Activated T-helper 2 cell treated with anti-CD3 and anti-CD28 coated beads, Interferon-gamma antibody, Interleukin-2, Interleukin-4, amounts not matched to agents 10 μg/mL and 5 μg/mL and 100 μg/mL, durations not matched to agents 14 hours and 24 hours and 36 hours (primary cell): ENCODE measurements at regions of chr14 and their contacts with region 1.

Region 1: GRCh38 chr14:60945984-60946383 is 34.9 kb downstream of the TRMT5 start:
- DNase-seq: no peak
- H3K4me3 Mint-ChIP-seq: no peak overlapping the region
- H3K27ac Mint-ChIP-seq: peak overlapping the region; percentile 67
- H3K4me1 Mint-ChIP-seq: peaks cover 13% of the 10 kb centered on the region
- H3K27me3 Mint-ChIP-seq: no peaks in the 10 kb centered on the region

Region 2: DNA sequence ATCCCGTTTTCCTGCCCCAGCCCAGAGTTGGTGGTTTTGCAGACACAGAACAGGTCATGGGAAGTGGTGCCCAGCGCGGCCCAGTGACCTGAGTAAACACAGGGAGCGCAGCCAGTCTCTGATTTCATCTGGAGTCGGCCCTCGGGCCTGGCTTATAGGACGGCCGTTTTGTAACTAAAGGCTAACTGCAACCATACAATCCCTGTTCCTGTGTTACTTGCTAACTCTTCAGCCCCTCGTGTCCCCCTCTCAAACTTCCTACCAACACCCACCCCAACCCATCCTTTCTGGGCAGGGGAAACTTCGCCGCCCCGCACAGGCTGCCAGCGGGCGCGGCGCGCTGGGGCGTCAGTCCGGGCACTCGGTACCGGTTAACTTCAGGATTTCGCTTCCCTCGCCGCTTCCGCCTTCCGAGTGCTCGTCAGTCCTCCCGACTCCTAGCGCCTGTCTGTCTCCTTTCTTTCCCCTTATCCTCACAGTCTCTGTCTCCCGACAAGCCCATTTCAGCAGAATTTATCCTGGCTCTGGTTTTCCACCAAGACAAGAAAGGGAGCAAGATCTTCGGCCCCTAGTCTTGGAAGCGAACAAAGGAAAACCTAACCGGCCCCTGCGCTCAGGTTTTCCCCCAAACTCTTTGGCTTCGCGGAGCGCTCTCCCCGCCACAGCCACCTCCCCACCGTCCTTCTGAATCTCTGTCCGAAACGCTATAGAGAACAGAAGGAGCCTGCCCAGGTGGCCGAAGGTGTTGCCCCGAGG is 298.7 kb before region 1 on chr14:
- intact Hi-C with region 1: no loop called
- DNase-seq: no peak
- H3K4me3 Mint-ChIP-seq: peak overlapping the region; percentile 61
- H3K27ac Mint-ChIP-seq: no peak overlapping the region
- H3K4me1 Mint-ChIP-seq: peaks cover 33% of the 10 kb centered on the region
- H3K27me3 Mint-ChIP-seq: peaks cover 86% of the 10 kb centered on the region

Region 3: GRCh38 chr14:60777856-60778578 is 168.0 kb before region 1 on chr14:
- intact Hi-C with region 1: loop called (anchors 1 kb)
- DNase-seq: no peak
- H3K4me3 Mint-ChIP-seq: no peak overlapping the region
- H3K27ac Mint-ChIP-seq: no peak overlapping the region
- H3K4me1 Mint-ChIP-seq: peaks cover 21% of the 10 kb centered on the region
- H3K27me3 Mint-ChIP-seq: no peaks in the 10 kb centered on the region

Region 4: GRCh38 chr14:60862286-60862685 is 83.7 kb before region 1 on chr14:
- intact Hi-C with region 1: loop called (anchors 1 kb)
- DNase-seq: no peak
- H3K4me3 Mint-ChIP-seq: no peak overlapping the region
- H3K27ac Mint-ChIP-seq: no peak overlapping the region
- H3K4me1 Mint-ChIP-seq: peaks cover 7% of the 10 kb centered on the region
- H3K27me3 Mint-ChIP-seq: peaks cover 8% of the 10 kb centered on the region

Region 5: GRCh38 chr14:60956202-60956601 is 10.2 kb after region 1 on chr14:
- intact Hi-C with region 1: loop called (anchors 1 kb)
- DNase-seq: no peak
- H3K4me3 Mint-ChIP-seq: no peak overlapping the region
- H3K27ac Mint-ChIP-seq: no peak overlapping the region
- H3K4me1 Mint-ChIP-seq: peaks cover 6% of the 10 kb centered on the region
- H3K27me3 Mint-ChIP-seq: no peaks in the 10 kb centered on the region

Region 6: DNA sequence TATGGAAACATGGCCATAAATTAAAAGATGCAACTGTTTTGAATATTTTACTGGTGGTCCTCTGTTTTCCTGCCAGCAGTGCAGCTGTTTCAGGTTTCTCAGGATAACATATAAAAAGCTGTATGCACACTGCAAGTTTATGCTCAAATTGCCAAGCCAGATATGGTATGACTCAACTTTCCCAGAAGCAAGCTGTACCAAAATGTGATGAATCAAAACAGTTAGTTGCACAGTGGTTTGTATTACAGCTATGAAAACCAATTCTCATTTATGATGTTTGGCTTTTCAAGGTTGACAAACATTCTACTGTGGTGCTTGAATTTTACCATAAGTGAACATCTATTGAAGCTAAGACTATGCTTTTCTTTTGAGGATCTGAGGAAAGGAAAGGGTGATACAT is 19.4 kb after region 1 on chr14:
- intact Hi-C with region 1: loop called (anchors 2 kb)
- DNase-seq: no peak
- H3K4me3 Mint-ChIP-seq: no peak overlapping the region
- H3K27ac Mint-ChIP-seq: peak overlapping the region; percentile 55
- H3K4me1 Mint-ChIP-seq: peaks cover 11% of the 10 kb centered on the region
- H3K27me3 Mint-ChIP-seq: no peaks in the 10 kb centered on the region